ENCODE measurements at regions of chr10 and their contacts with region 1.

Region 1: DNA sequence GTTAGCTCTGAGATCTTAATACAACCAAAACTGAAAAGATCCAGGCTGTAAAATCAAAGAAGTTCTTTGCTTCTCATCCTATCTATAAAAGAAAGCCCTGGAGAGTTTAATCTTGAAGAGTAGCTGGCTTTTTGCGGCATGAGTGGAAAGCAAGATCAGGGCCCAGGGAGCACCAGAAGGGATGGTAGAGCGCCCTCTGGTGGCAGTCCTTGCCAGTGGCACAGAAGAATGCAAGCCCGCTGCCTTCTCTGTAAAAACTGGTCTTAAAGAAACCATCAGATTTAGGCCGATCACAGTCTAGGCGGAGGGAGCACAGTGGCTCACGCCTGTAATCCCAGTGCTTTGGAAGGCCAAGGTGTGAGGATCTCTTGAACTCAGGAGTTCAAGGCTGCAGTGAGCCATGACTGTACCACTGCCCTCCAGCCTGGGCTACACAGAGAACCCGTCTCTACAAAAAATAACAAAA is 35.6 kb downstream of the CPN1 start:
- DNase-seq: peak; percentile 87
- ATAC-seq: peak; percentile 90 to 91
- H3K4me3 ChIP-seq: no peak overlapping the region
- H3K27ac ChIP-seq: no peak overlapping the region
- H3K4me1 ChIP-seq: peaks cover 4% of the 10 kb centered on the region
- H3K27me3 ChIP-seq: no peaks in the 10 kb centered on the region
- CTCF ChIP-seq: peak; percentile 97

Region 2: DNA sequence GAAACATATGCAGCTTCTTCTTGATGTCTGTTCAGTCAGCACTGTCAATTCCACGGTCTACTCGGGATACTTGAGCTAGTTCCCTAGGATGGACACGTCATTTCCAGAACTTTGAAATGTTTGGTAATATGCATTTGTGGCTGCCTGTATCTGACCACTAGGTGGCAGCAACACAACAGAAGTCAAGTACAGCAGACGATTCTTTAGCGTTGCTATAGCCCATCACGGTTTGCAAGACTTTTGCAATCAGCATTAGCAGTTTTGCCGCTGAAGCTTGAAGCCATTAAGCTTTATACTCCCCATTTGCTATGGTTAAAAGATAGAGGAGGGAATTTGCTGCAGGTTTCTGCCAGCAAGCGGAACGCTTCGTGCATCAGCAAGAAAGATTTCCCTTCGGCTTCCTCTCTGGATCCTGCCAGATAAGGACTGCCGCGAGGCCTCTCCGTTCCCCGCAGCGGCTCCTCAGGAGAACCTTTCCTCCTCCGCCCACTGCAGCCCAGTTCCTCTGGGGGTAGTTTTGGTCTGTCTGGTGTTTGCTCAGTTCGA is 200.1 kb before region 1 on chr10:
- intact Hi-C with region 1: loop called (anchors 5 kb)
- DNase-seq: peak; percentile 60
- ATAC-seq: peak; percentile 93 to 96
- H3K4me3 ChIP-seq: peak overlapping the region; percentile 44
- H3K27ac ChIP-seq: no peak overlapping the region
- H3K4me1 ChIP-seq: peaks cover 12% of the 10 kb centered on the region
- H3K27me3 ChIP-seq: no peaks in the 10 kb centered on the region
- CTCF ChIP-seq: peak; percentile 94

Measured in lower lobe of right lung (tissue), 2 donors.